B cell (primary cell): ENCODE measurements at regions of chr19 and their contacts with region 1.

Region 1: DNA sequence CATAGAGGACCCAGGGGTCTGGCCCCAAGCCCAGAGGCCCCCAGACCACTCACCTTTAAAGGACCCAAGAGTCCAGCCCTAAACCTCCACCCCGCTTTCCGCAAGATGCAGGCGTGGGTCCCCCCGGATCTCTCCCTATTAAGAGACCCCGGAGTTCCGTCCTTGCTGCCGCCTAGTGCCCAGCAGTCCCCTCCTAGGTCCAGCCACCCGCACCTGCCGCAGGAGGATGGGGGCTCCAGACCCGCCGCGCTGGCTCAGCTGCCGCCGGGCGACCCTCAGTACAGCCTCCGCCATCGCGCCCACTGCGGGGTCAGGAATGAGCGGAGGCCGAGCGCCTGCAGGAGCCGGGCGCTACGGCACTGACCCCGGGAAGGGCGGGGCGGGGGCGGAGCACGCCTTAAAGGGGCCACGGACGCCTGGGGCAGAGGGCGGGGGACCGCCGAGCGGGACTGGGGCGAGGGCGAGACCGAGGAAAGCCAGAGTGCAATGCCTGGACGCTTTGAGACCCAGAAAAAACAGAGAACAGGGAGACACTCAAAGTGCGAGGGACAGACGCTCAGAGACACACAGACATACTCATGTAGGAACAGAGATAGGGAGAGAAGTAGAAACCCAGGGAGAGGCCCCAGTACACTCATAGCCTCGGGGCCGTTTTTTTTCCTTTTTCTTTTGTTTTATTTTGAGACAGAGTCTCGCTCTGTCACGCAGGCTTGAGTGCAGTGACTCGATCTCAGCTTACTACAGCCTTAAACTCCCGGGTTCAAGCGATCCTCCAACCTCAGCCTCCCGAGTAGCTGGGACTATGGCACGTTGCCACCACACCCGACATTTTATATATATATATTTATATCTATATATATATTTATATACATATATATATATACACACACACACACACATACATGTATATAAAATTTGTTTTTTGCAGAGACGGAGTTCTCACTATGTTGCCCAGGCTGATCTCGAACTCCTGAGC is at the start of gene ETHE1:
- DNase-seq: peak; percentile 69
- ATAC-seq: peak; percentile 94
- H3K4me3 ChIP-seq: peak within 1 kb of the TSS; percentile 58 to 78 (median 72)
- H3K4me3 Mint-ChIP-seq: peak within 1 kb of the TSS; percentile 98
- H3K27ac ChIP-seq: peak within 1 kb of the TSS; percentile 16 to 63
- H3K27ac Mint-ChIP-seq: peak within 1 kb of the TSS; percentile 88
- H3K4me1 ChIP-seq: peaks cover 20 to 34% of the 10 kb centered on the region in 2 donors
- H3K4me1 Mint-ChIP-seq: peaks cover 32% of the 10 kb centered on the region
- H3K27me3 ChIP-seq: no peaks in the 10 kb centered on the region
- H3K27me3 Mint-ChIP-seq: no peaks in the 10 kb centered on the region
- CTCF ChIP-seq: no peak
- total RNA-seq, gene ETHE1: 16.0 and 22.3 TPM in 2 replicates

Region 2: DNA sequence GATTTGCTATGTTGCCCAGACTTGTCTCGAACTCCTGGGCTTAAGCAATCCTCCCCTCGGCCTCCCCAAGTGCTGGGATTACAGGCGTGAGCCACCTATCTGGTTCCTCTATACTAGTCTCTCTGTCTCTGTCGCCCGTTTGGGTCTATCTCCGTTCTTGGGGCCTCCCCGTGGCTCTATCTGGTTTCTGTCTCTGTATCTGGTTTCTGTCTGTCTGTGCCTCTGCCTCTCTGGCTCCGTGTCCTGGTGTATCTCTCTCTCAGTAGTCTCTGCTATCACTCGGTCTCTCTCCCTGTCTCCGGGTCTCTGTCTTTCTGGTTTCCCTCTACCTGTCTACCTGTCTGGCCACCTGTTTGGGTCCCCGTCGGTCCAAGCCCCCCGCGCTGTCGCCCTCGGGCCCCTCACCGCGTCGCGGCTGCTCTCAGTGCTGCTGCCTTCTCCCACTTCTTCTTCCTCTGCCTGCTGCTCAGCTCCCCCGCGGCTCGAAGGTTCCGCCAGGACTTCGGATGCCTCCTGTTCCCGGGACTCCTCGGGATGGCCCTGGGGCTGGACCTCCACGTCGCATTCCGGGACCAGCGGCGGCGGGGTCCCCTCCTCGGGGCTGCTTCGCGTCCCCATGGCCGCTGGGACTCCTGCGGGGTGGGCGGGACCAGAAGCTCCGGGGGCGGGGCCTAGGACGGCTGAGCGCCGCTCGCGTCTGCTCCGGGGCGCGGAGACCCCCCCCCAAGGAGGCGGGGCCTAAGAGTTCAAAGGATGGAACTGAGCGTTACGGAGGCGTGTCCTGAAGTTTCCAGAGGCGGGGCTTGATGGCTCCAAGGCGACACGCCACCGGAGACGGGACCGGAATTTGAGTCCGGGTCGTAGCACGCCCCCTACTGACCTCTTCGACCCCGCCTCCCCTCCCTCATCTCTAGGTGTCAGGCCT is 23.4 kb before region 1 on chr19:
- CTCF ChIA-PET with region 1: interaction called, 13 read pairs
- POLR2A ChIA-PET with region 1: interaction called, 7 read pairs
- intact Hi-C with region 1: no loop called
- DNase-seq: peak; percentile 97
- ATAC-seq: peak; percentile 95
- H3K4me3 ChIP-seq: peak overlapping the region; percentile 65 to 97 (median 76)
- H3K4me3 Mint-ChIP-seq: peak overlapping the region; percentile 95
- H3K27ac ChIP-seq: peak overlapping the region; percentile 80 to 82
- H3K27ac Mint-ChIP-seq: peak overlapping the region; percentile 98
- H3K4me1 ChIP-seq: peaks cover 12 to 22% of the 10 kb centered on the region in 2 donors
- H3K4me1 Mint-ChIP-seq: peaks cover 23% of the 10 kb centered on the region
- H3K27me3 ChIP-seq: no peaks in the 10 kb centered on the region
- H3K27me3 Mint-ChIP-seq: no peaks in the 10 kb centered on the region
- CTCF ChIP-seq: no peak